ENCODE measurements at regions of chr13 and their contacts with region 1.

Region 1: DNA sequence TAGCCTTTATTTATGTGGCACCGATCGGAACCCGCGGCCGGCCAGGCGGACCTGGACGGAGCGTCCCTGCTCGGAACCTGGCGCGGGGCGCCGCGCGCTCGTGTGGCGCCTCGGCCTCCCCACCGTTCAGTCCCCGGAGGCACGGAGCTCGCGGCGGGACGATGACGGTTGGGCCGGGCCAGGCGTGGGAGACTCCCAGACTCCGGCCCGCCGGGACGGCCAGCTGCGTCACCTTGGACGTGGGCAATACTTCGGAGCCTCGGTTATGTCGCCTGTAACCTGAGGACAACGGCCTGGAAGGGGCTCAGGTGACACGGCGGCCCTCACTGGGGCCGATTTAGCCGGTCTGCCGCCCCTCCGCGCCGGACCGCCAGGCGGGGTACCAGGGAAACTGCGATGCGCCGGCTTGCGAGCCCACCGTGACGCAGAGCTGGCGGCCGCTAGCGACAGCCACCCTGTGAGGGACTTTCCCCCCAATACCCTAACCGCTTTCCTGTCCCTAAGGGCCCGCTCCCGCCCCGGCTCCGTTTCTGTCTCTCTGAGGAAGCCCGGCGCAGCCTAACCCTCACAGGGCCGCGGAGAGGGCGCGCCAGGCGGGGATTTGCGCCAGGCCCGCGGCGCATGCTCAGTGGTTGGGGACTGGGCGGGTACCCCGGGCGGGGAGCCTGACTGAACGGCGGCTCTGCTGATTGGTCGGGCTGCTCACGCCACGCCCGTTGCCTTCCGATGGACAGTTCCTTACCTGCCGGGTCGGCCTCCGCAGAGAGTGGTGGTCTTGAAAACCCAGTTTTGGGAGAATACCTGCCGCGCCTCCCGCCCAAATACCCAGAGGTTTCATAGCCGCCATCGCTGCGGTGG is 109.5 kb upstream of the DOCK9 start:
- DNase-seq: peak; percentile 84 to 91
- H3K4me3 ChIP-seq: peak overlapping the region; percentile 82 to 97 (median 83)
- H3K27ac ChIP-seq: peak overlapping the region; percentile 92 to 98
- H3K4me1 ChIP-seq: no peaks in the 10 kb centered on the region
- H3K27me3 ChIP-seq: no peaks in the 10 kb centered on the region
- CTCF ChIP-seq: peak in 2 of 3 donors; percentile 27 to 40
- POLR2A ChIP-seq: peak; percentile 76

Region 2: GRCh38 chr13:99113351-99113750 is 26.0 kb after region 1 on chr13:
- intact Hi-C with region 1: no loop called
- DNase-seq: no peak
- H3K4me3 ChIP-seq: no peak overlapping the region
- H3K27ac ChIP-seq: no peak overlapping the region
- H3K4me1 ChIP-seq: no peaks in the 10 kb centered on the region
- H3K27me3 ChIP-seq: no peaks in the 10 kb centered on the region
- CTCF ChIP-seq: no peak
- POLR2A ChIP-seq: no peak

Region 3: DNA sequence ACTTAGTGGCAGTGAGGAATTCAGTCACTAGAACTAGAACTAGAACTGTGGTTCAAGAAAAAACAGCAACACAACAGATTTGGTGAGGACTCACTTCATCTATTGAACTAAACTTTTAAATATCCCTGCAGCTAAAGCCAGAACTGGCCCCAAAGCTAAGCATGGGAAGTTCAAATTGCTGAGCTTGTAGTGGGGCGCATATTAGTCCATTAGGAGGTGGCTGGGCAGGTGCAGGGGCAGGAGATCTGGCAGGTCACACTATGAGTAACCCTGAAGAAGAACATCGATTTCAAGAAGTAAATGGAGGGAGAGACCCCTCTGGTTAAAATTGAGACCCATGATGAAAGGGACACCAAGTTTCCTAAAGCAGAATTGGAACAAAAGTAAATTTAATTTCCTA is 39.5 kb after region 1 on chr13:
- intact Hi-C with region 1: loop called (anchors 2 kb)
- DNase-seq: no peak
- H3K4me3 ChIP-seq: no peak overlapping the region
- H3K27ac ChIP-seq: no peak overlapping the region
- H3K4me1 ChIP-seq: no peaks in the 10 kb centered on the region
- H3K27me3 ChIP-seq: peaks cover 0 to 11% of the 10 kb centered on the region in 2 donors
- CTCF ChIP-seq: no peak
- POLR2A ChIP-seq: no peak